Ovary (tissue), 10 donors: ENCODE measurements at regions of chr20 and their contacts with region 1.

Region 1: GRCh38 chr20:10673988-10674711 is at the start of gene JAG1:
- DNase-seq: peak; percentile 95 to 98 (median 96)
- H3K4me3 ChIP-seq: peak within 1 kb of the TSS; percentile 66
- H3K27ac ChIP-seq: peak within 1 kb of the TSS; percentile 90 to 98
- H3K4me1 ChIP-seq: peaks cover 3% of the 10 kb centered on the region
- H3K27me3 ChIP-seq: no peaks in the 10 kb centered on the region
- CTCF ChIP-seq: no peak
- EP300 ChIP-seq: no peak
- POLR2A ChIP-seq: peak; percentile 84
- total RNA-seq, gene JAG1: 27.1 to 69.7 (median 41.0) TPM

Region 2: DNA sequence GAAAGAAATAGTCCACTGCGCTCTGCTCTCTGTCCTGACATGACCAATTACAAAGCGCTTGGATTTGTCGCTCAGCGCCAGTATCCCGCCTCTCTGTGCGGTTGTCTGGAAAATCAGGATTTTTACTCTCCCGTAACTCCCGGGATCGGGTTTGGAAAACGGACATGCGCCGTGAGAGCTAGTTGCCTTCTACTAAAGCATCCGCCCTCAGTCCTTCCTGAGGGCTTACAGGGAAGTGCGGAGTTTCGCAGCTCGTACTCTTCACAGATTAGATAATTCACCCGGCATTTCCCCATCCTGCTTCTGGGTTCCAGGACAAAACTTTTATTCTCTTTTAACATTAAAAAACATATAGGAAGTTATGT is 239.7 kb before region 1 on chr20:
- intact Hi-C with region 1: loop called in 1 of 4 experiments (anchors 10 kb)
- DNase-seq: peak; percentile 90 to 95 (median 92)
- H3K4me3 ChIP-seq: peak overlapping the region; percentile 54
- H3K27ac ChIP-seq: peak overlapping the region; percentile 78 to 83
- H3K4me1 ChIP-seq: peaks cover 7% of the 10 kb centered on the region
- H3K27me3 ChIP-seq: no peaks in the 10 kb centered on the region
- CTCF ChIP-seq: no peak
- EP300 ChIP-seq: no peak
- POLR2A ChIP-seq: peak; percentile 91

Region 3: GRCh38 chr20:10553326-10553984 is 120.7 kb before region 1 on chr20:
- intact Hi-C with region 1: loop called in 2 of 4 experiments (anchors 2 to 10 kb)
- DNase-seq: peak; percentile 30 to 81 (median 66)
- H3K4me3 ChIP-seq: no peak overlapping the region
- H3K27ac ChIP-seq: no peak overlapping the region
- H3K4me1 ChIP-seq: peaks cover under 1% of the 10 kb centered on the region
- H3K27me3 ChIP-seq: no peaks in the 10 kb centered on the region
- CTCF ChIP-seq: peak; percentile 52 to 76 (median 69)
- EP300 ChIP-seq: no peak
- POLR2A ChIP-seq: no peak

Region 4: GRCh38 chr20:10721137-10721896 is 47.2 kb after region 1 on chr20:
- intact Hi-C with region 1: no loop called
- DNase-seq: no peak
- H3K4me3 ChIP-seq: no peak overlapping the region
- H3K27ac ChIP-seq: no peak overlapping the region
- H3K4me1 ChIP-seq: peaks cover 5% of the 10 kb centered on the region
- H3K27me3 ChIP-seq: no peaks in the 10 kb centered on the region
- CTCF ChIP-seq: no peak
- EP300 ChIP-seq: no peak
- POLR2A ChIP-seq: no peak

Region 5: GRCh38 chr20:11274141-11274594 is 600.0 kb after region 1 on chr20:
- intact Hi-C with region 1: loop called in 1 of 4 experiments (anchors 5 kb)
- DNase-seq: peak in 1 of 5 donors; percentile 32
- H3K4me3 ChIP-seq: no peak overlapping the region
- H3K27ac ChIP-seq: no peak overlapping the region
- H3K4me1 ChIP-seq: no peaks in the 10 kb centered on the region
- H3K27me3 ChIP-seq: no peaks in the 10 kb centered on the region
- CTCF ChIP-seq: peak in 2 of 3 donors; percentile 37 to 45
- EP300 ChIP-seq: no peak
- POLR2A ChIP-seq: no peak